ENCODE measurements at regions of chr2 and their contacts with region 1.

Region 1: GRCh38 chr2:138548796-138549195 is 47.2 kb downstream of the SPOPL start:
- DNase-seq: no peak
- H3K4me3 ChIP-seq: no peak overlapping the region
- H3K27ac ChIP-seq: no peak overlapping the region
- H3K4me1 ChIP-seq: no peaks in the 10 kb centered on the region
- H3K27me3 ChIP-seq: no peaks in the 10 kb centered on the region
- CTCF ChIP-seq: no peak

Region 2: GRCh38 chr2:138596403-138596802 is 47.6 kb after region 1 on chr2:
- CTCF ChIA-PET with region 1: interaction called, 10 read pairs
- POLR2A ChIA-PET with region 1: no interaction called
- intact Hi-C with region 1: no loop called
- DNase-seq: no peak
- H3K4me3 ChIP-seq: no peak overlapping the region
- H3K27ac ChIP-seq: no peak overlapping the region
- H3K4me1 ChIP-seq: no peaks in the 10 kb centered on the region
- H3K27me3 ChIP-seq: no peaks in the 10 kb centered on the region
- CTCF ChIP-seq: no peak